ENCODE measurements at regions of chr11 and their contacts with region 1.

Region 1: GRCh38 chr11:114262681-114263512 is 33.3 kb upstream of the NNMT start:
- DNase-seq: peak; percentile 26
- ATAC-seq: peak; percentile 87
- H3K4me3 ChIP-seq: no peak overlapping the region
- H3K27ac ChIP-seq: no peak overlapping the region
- H3K4me1 ChIP-seq: no peaks in the 10 kb centered on the region
- H3K27me3 ChIP-seq: peaks cover 25% of the 10 kb centered on the region; the same call in 1 of the 2 replicates
- CTCF ChIP-seq: peak; percentile 37 to 67 (median 62); a peak in 5 of 6 replicates
- POLR2A ChIP-seq: no peak
- RAD21 ChIP-seq: peak; percentile 79

Region 2: GRCh38 chr11:113305440-113306336 is 957.2 kb before region 1 on chr11:
- CTCF ChIA-PET with region 1: interaction called, 4 read pairs
- POLR2A ChIA-PET with region 1: no interaction called
- RAD21 ChIA-PET with region 1: no interaction called
- intact Hi-C with region 1: loop called (anchors 2 kb)
- DNase-seq: peak; percentile 53
- ATAC-seq: peak; percentile 98
- H3K4me3 ChIP-seq: no peak overlapping the region
- H3K27ac ChIP-seq: no peak overlapping the region
- H3K4me1 ChIP-seq: no peaks in the 10 kb centered on the region
- H3K27me3 ChIP-seq: peaks cover 19% of the 10 kb centered on the region
- CTCF ChIP-seq: peak; percentile 89 to 91 (median 90)
- POLR2A ChIP-seq: no peak
- RAD21 ChIP-seq: peak; percentile 97

Region 3: DNA sequence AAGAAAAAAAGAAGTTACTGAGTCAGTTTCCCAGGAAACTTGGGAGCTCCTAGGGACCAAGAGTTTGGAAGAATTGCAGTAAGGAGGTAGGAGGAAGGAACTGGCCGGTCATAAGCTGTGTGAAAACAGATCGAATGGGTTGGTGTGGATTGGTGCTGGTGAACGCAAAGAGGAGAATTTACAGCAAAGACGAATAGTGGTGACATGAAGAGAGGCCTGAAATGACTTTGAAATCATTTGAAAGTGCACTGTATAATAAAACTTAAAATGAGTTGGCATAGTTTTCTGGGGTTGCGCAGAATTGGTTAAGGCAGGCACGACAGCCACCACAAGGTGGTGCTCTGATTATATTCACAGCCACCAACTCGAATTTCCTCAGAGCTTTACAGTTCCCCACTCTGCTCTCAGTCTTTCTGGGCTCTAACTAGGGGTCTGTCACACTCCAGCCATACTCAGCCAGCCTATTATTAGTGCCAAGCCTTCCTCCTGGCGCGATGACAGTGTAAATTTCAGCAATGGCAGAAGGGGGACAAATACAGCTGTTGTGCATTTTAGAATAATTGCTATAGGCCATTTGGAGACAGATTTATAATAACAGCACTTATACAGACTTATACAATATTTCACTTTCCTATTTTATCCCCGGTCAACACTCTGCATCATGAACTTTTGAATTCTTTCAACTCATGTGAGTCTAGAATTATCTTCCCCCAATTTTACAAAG is 366.6 kb before region 1 on chr11:
- CTCF ChIA-PET with region 1: interaction called, 72 read pairs
- POLR2A ChIA-PET with region 1: no interaction called
- RAD21 ChIA-PET with region 1: interaction called, 8 to 10 read pairs
- intact Hi-C with region 1: loop called (anchors 1 kb)
- DNase-seq: peak; percentile 10
- ATAC-seq: peak; percentile 91
- H3K4me3 ChIP-seq: no peak overlapping the region
- H3K27ac ChIP-seq: no peak overlapping the region
- H3K4me1 ChIP-seq: no peaks in the 10 kb centered on the region
- H3K27me3 ChIP-seq: 0 out of 2 replicates have a peak, but pooled peaks cover 5% of the 10 kb centered on the region
- CTCF ChIP-seq: peak; percentile 67 to 85 (median 75)
- POLR2A ChIP-seq: no peak
- RAD21 ChIP-seq: peak; percentile 79

Region 4: GRCh38 chr11:113994077-113994954 is 268.6 kb before region 1 on chr11:
- CTCF ChIA-PET with region 1: interaction called, 74 read pairs
- POLR2A ChIA-PET with region 1: no interaction called
- RAD21 ChIA-PET with region 1: interaction called, 5 to 7 read pairs
- intact Hi-C with region 1: loop called (anchors 1 kb)
- DNase-seq: no peak
- ATAC-seq: peak; percentile 75
- H3K4me3 ChIP-seq: no peak overlapping the region
- H3K27ac ChIP-seq: no peak overlapping the region
- H3K4me1 ChIP-seq: no peaks in the 10 kb centered on the region
- H3K27me3 ChIP-seq: peaks cover 33% of the 10 kb centered on the region
- CTCF ChIP-seq: peak; percentile 66 to 81 (median 74)
- POLR2A ChIP-seq: no peak
- RAD21 ChIP-seq: peak; percentile 82

Region 5: GRCh38 chr11:114180301-114181055 is 82.4 kb before region 1 on chr11:
- CTCF ChIA-PET with region 1: interaction called, 4 read pairs
- POLR2A ChIA-PET with region 1: no interaction called
- RAD21 ChIA-PET with region 1: no interaction called
- intact Hi-C with region 1: loop called (anchors 5 kb)
- DNase-seq: no peak
- ATAC-seq: peak; percentile 94
- H3K4me3 ChIP-seq: no peak overlapping the region
- H3K27ac ChIP-seq: no peak overlapping the region
- H3K4me1 ChIP-seq: no peaks in the 10 kb centered on the region
- H3K27me3 ChIP-seq: peaks cover 55% of the 10 kb centered on the region
- CTCF ChIP-seq: peak; percentile 63 to 72 (median 71)
- POLR2A ChIP-seq: no peak
- RAD21 ChIP-seq: peak; percentile 81

Measured in HCT116 (cell line).